PC-3 (cell line): ENCODE measurements at regions of chr21 and their contacts with region 1.

Region 1: GRCh38 chr21:44338971-44339910 is at the start of gene CFAP410:
- DNase-seq: peak; percentile 96
- ATAC-seq: peak; percentile 88
- H3K4me3 ChIP-seq: peak within 1 kb of the TSS; percentile 94
- H3K27ac ChIP-seq: peak within 1 kb of the TSS; percentile 98
- H3K4me1 ChIP-seq: peaks cover 13% of the 10 kb centered on the region
- H3K27me3 ChIP-seq: no peaks in the 10 kb centered on the region
- CTCF ChIP-seq: no peak
- total RNA-seq, gene CFAP410: 16.1 and 18.4 TPM in 2 replicates

Region 2: DNA sequence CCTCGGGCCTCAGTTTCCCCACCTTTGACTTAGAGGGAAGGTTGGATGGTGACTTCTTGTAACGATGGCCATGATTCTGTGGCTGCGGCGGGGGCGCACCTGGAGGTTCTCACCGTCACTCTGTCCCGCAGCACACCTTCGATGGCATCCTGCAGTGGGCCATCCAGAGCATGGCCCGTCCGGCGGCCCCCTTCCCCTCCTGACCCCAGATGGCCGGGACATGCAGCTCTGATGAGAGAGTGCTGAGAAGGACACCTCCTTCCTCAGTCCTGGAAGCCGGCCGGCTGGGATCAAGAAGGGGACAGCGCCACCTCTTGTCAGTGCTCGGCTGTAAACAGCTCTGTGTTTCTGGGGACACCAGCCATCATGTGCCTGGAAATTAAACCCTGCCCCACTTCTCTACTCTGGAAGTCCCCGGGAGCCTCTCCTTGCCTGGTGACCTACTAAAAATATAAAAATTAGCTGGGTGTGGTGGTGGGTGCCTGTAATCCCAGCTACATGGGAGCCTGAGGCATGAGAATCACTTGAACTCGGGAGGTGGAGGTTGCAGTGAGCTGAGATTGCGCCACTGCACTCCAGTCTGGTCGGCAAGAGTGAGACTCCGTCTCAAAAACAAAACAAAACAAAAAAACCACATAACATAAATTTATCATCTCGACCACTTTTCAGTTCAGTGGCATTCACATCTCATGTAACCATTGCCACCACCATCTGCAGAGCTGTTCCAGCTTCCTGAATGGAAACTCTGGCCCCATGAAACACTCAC is 41.5 kb before region 1 on chr21:
- CTCF ChIA-PET with region 1: interaction called, 16 read pairs
- POLR2A ChIA-PET with region 1: no interaction called
- intact Hi-C with region 1: no loop called
- DNase-seq: peak; percentile 91
- ATAC-seq: peak; percentile 54
- H3K4me3 ChIP-seq: no peak overlapping the region
- H3K27ac ChIP-seq: peak overlapping the region; percentile 28
- H3K4me1 ChIP-seq: peaks cover 34% of the 10 kb centered on the region
- H3K27me3 ChIP-seq: no peaks in the 10 kb centered on the region
- CTCF ChIP-seq: peak; percentile 86

Region 3: GRCh38 chr21:44310628-44311511 is 28.4 kb before region 1 on chr21:
- CTCF ChIA-PET with region 1: no interaction called
- POLR2A ChIA-PET with region 1: no interaction called
- intact Hi-C with region 1: no loop called
- DNase-seq: no peak
- ATAC-seq: no peak
- H3K4me3 ChIP-seq: no peak overlapping the region
- H3K27ac ChIP-seq: no peak overlapping the region
- H3K4me1 ChIP-seq: no peaks in the 10 kb centered on the region
- H3K27me3 ChIP-seq: no peaks in the 10 kb centered on the region
- CTCF ChIP-seq: no peak

Region 4: GRCh38 chr21:44375281-44375651 is 36.0 kb after region 1 on chr21:
- CTCF ChIA-PET with region 1: no interaction called
- POLR2A ChIA-PET with region 1: no interaction called
- intact Hi-C with region 1: no loop called
- DNase-seq: no peak
- ATAC-seq: no peak
- H3K4me3 ChIP-seq: no peak overlapping the region
- H3K27ac ChIP-seq: no peak overlapping the region
- H3K4me1 ChIP-seq: peaks cover 5% of the 10 kb centered on the region; the same call in 1 of the 2 replicates
- H3K27me3 ChIP-seq: peaks cover 4% of the 10 kb centered on the region; the same call in 1 of the 2 replicates
- CTCF ChIP-seq: no peak

Region 5: GRCh38 chr21:44428281-44428942 is 89.2 kb after region 1 on chr21:
- CTCF ChIA-PET with region 1: no interaction called
- POLR2A ChIA-PET with region 1: interaction called, 4 read pairs
- intact Hi-C with region 1: loop called (anchors 5 kb)
- DNase-seq: peak; percentile 93
- ATAC-seq: peak; percentile 52
- H3K4me3 ChIP-seq: no peak overlapping the region
- H3K27ac ChIP-seq: no peak overlapping the region
- H3K4me1 ChIP-seq: peaks cover 4% of the 10 kb centered on the region; the same call in 1 of the 2 replicates
- H3K27me3 ChIP-seq: no peaks in the 10 kb centered on the region
- CTCF ChIP-seq: no peak

Region 6: DNA sequence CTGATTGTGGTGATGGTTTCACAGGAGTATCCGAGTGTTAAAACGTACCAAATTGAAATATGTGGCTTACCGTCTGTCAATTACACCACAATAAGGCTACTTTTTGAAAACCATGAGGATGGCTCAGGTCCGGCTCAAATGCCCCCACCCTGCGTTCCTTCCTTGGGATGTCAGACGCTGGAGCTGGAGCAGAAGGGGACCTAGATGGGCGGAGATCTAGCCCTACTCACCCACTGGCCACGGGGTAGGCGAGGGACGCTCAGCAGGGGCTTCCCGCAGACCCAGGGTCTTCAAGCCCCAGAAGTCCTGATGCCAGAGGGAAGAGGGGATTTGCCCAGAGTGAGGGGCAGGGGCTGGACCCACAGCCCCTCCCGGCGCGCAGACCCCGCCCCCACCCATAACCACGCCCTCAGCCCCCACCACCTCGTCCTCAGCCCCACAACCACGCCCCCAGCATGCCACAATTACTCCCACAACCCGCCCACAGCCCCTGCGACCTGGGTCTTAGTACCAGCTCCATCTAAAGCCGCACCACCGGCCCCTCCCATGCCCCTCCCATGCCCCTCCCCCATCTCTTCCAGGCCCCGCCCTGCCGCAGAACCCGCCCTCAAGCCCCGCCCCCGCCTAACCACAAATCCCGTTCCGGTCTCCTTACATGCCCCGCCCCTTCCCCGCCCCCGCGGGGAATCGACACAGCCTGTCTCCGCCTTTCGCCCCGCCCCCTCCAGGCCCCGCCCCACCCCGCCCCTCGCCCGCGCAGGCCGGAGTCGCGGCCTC is 115.7 kb after region 1 on chr21 and contains the start of gene LRRC3:
- CTCF ChIA-PET with region 1: no interaction called
- POLR2A ChIA-PET with region 1: no interaction called
- intact Hi-C with region 1: loop called (anchors 10 kb)
- DNase-seq: peak; percentile 86
- ATAC-seq: peak; percentile 74
- H3K4me3 ChIP-seq: peak within 1 kb of the TSS; percentile 81
- H3K27ac ChIP-seq: no peak within 1 kb of the TSS
- H3K4me1 ChIP-seq: no peaks in the 10 kb centered on the region
- H3K27me3 ChIP-seq: peaks cover 13% of the 10 kb centered on the region; the same call in 1 of the 2 replicates
- CTCF ChIP-seq: no peak
- total RNA-seq, gene LRRC3: 3.1 and 4.1 TPM in 2 replicates